ENCODE measurements at regions of chr3 and their contacts with region 1.

Region 1: DNA sequence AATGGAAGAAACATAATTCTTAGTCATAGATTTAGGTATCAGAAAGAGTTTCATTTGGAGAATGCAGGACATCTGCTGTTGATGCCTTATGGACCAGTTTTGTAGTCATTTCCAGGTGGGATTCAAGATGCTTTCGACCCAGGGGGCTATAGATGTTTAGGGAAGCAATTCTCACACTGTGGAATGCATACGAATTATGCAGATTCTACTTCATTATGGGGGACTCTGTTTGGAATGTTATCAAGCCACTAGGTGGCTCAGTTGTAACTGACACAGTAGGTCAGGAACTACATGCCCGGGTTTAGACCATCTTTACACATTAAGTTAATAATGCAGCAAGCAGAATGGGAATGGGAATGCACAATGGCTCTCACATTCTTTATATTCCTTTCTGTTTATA is 1359.8 kb downstream of the ZPLD1 start:
- DNase-seq: peak; percentile 12
- ATAC-seq: peak; percentile 79
- H3K4me3 ChIP-seq: no peak overlapping the region
- H3K27ac ChIP-seq: no peak overlapping the region
- H3K4me1 ChIP-seq: no peaks in the 10 kb centered on the region
- H3K27me3 ChIP-seq: no peaks in the 10 kb centered on the region
- CTCF ChIP-seq: peak; percentile 54
- EP300 ChIP-seq: no peak
- POLR2A ChIP-seq: no peak
- RAD21 ChIP-seq: no peak

Region 2: DNA sequence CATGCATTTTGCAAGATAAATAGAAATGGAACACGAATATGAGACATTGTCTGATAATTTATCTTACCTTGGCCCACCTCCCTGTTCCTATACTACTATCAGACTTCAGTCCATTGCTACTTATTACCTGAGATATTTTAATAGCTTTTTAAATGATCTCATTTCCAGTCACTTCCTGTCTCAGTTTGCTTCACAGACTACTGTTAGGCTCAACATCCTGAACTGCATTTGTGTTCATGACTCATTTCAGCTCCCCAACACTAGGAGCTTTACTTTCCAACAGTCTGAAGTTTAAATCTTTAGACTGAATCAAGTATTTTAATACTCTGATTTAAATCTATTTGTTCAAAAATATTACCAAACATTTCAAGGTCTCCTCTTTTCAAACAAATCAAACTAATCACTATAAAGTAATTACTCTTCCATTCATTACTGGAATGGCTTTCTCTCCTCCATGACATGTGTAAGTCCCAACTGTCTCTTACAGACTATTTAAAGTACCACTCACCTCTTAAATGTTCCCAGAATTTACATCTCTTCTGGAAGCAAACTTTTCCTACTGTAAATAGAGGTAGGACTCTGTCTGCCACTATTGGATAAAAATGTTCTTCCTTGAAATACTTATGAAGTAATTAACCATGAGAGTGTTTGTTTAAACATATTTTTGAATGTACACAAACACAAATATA is 82.2 kb before region 1 on chr3:
- CTCF ChIA-PET with region 1: no interaction called
- POLR2A ChIA-PET with region 1: no interaction called
- in situ Hi-C with region 1: no loop called
- intact Hi-C with region 1: no loop called
- DNase-seq: no peak
- ATAC-seq: no peak
- H3K4me3 ChIP-seq: no peak overlapping the region
- H3K27ac ChIP-seq: no peak overlapping the region
- H3K4me1 ChIP-seq: no peaks in the 10 kb centered on the region
- H3K27me3 ChIP-seq: no peaks in the 10 kb centered on the region
- CTCF ChIP-seq: no peak
- EP300 ChIP-seq: no peak
- POLR2A ChIP-seq: no peak
- RAD21 ChIP-seq: no peak

Region 3: GRCh38 chr3:103810167-103810566 is 15.5 kb after region 1 on chr3:
- CTCF ChIA-PET with region 1: no interaction called
- POLR2A ChIA-PET with region 1: no interaction called
- in situ Hi-C with region 1: no loop called
- intact Hi-C with region 1: no loop called
- DNase-seq: no peak
- ATAC-seq: no peak
- H3K4me3 ChIP-seq: no peak overlapping the region
- H3K27ac ChIP-seq: no peak overlapping the region
- H3K4me1 ChIP-seq: no peaks in the 10 kb centered on the region
- H3K27me3 ChIP-seq: no peaks in the 10 kb centered on the region
- CTCF ChIP-seq: no peak
- EP300 ChIP-seq: no peak
- POLR2A ChIP-seq: no peak
- RAD21 ChIP-seq: no peak

Region 4: GRCh38 chr3:103847081-103848062 is 52.7 kb after region 1 on chr3:
- CTCF ChIA-PET with region 1: no interaction called
- POLR2A ChIA-PET with region 1: no interaction called
- in situ Hi-C with region 1: no loop called
- intact Hi-C with region 1: no loop called
- DNase-seq: peak; percentile 47
- ATAC-seq: peak; percentile 73
- H3K4me3 ChIP-seq: no peak overlapping the region
- H3K27ac ChIP-seq: no peak overlapping the region
- H3K4me1 ChIP-seq: peaks cover 24% of the 10 kb centered on the region
- H3K27me3 ChIP-seq: no peaks in the 10 kb centered on the region; a peak in 1 of 5 replicates
- CTCF ChIP-seq: no peak
- EP300 ChIP-seq: no peak
- POLR2A ChIP-seq: no peak
- RAD21 ChIP-seq: no peak

Region 5: GRCh38 chr3:104214277-104214676 is 419.6 kb after region 1 on chr3:
- CTCF ChIA-PET with region 1: no interaction called
- POLR2A ChIA-PET with region 1: no interaction called
- in situ Hi-C with region 1: no loop called
- intact Hi-C with region 1: loop called (anchors 10 kb)
- DNase-seq: no peak
- ATAC-seq: no peak
- H3K4me3 ChIP-seq: no peak overlapping the region
- H3K27ac ChIP-seq: no peak overlapping the region
- H3K4me1 ChIP-seq: no peaks in the 10 kb centered on the region
- H3K27me3 ChIP-seq: no peaks in the 10 kb centered on the region
- CTCF ChIP-seq: no peak
- EP300 ChIP-seq: no peak
- POLR2A ChIP-seq: no peak
- RAD21 ChIP-seq: no peak

Region 6: DNA sequence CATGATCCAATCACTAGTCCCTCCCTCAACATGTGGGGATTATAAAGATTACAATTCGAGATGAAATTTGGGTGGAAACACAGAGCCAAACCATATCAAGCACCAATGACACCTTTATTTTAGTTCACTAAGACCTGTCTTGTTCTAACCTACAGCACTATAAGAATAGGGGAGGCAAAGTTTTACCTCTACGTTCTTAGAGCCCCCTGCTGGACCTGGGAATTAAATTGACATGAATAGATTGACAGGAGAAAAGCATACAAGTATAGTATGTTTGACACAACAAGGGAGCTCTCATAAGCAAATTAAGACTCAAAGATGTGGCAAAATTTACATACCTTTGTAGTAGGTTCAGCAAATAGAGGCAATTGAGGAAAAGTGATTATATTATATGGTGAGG is 597.7 kb after region 1 on chr3:
- CTCF ChIA-PET with region 1: no interaction called
- POLR2A ChIA-PET with region 1: no interaction called
- in situ Hi-C with region 1: no loop called
- intact Hi-C with region 1: loop called (anchors 5 kb)
- DNase-seq: peak; percentile 4
- ATAC-seq: peak; percentile 59; the same call in 2 of the 3 replicates
- H3K4me3 ChIP-seq: no peak overlapping the region
- H3K27ac ChIP-seq: no peak overlapping the region
- H3K4me1 ChIP-seq: no peaks in the 10 kb centered on the region
- H3K27me3 ChIP-seq: no peaks in the 10 kb centered on the region
- CTCF ChIP-seq: peak; percentile 28
- EP300 ChIP-seq: no peak
- POLR2A ChIP-seq: no peak
- RAD21 ChIP-seq: no peak